ENCODE measurements at regions of chr13 and their contacts with region 1.

Region 1: DNA sequence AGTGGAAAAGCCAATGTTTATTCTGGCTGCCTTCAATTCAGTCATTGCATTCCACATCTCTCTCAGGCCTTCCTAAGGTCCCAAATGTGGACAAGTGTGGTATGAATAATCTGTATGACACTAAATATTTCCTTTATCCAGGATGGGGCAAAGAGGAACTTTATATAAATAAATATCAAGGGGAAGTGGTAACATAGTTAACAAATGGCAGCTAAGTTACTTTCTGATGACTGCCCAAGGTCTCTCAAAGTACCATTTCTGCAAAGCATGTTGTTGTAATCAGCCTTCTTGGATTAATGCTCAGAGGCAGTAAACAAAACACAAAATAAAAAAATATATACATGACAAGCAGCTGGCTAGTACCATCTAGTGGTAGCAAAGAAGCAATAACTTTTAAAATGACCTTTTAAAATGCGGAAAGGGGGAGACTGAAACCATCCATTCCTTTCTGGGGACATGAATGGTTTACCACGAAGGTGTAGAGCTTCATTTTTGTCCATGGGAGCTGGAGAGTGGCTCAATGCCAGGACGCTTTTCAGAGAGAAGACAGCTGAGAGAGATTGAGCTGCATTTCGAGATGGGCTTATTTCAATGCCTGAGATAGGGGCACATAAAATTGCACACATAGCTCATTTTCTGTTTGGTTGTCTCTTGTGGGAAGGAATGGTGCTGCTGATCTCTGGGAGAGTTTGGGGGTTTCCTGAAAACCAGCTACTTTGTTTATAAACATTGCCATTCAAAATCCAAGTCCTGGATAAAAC is 259.2 kb downstream of the RFC3 start:
- DNase-seq: no peak
- H3K4me3 ChIP-seq: no peak overlapping the region
- H3K27ac ChIP-seq: no peak overlapping the region
- H3K4me1 ChIP-seq: no peaks in the 10 kb centered on the region
- H3K27me3 ChIP-seq: no peaks in the 10 kb centered on the region
- CTCF ChIP-seq: peak; percentile 40 to 65 (median 51)
- POLR2A ChIP-seq: no peak

Region 2: DNA sequence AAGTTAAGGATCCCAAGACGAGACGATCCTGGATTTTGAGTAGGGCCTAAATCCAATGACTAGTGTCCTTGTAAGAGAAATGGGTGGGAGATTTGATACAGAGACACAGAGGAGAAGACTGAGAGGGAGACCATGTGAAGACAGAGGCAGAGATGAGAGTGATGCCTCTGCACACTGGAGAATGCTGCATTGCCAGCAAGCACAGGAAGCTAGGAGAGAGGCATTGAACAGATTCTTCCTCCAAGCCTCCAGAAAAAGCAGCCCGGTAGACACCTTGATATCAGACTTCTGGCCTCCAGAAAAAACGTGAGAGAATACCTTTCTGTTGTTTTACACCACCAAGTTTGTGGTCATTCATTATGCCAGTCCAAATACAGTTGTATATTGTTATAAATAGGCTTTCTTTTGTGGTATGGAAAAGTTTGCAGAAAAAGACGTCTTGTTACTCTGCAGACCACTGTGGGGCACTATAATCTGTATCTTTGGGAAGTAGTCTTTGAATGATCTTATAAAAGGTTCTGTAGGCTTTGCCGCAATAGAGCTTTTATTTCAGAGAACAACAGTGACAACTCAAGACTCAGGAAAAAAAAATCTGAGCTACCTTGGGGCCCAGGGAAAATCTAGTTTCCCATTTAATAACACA is 277.1 kb before region 1 on chr13:
- intact Hi-C with region 1: loop called (anchors 10 kb)
- DNase-seq: no peak
- H3K4me3 ChIP-seq: no peak overlapping the region
- H3K27ac ChIP-seq: no peak overlapping the region
- H3K4me1 ChIP-seq: no peaks in the 10 kb centered on the region
- H3K27me3 ChIP-seq: no peaks in the 10 kb centered on the region
- CTCF ChIP-seq: peak in 3 of 4 experiments; percentile 25 to 41 (median 32)
- POLR2A ChIP-seq: no peak

Region 3: DNA sequence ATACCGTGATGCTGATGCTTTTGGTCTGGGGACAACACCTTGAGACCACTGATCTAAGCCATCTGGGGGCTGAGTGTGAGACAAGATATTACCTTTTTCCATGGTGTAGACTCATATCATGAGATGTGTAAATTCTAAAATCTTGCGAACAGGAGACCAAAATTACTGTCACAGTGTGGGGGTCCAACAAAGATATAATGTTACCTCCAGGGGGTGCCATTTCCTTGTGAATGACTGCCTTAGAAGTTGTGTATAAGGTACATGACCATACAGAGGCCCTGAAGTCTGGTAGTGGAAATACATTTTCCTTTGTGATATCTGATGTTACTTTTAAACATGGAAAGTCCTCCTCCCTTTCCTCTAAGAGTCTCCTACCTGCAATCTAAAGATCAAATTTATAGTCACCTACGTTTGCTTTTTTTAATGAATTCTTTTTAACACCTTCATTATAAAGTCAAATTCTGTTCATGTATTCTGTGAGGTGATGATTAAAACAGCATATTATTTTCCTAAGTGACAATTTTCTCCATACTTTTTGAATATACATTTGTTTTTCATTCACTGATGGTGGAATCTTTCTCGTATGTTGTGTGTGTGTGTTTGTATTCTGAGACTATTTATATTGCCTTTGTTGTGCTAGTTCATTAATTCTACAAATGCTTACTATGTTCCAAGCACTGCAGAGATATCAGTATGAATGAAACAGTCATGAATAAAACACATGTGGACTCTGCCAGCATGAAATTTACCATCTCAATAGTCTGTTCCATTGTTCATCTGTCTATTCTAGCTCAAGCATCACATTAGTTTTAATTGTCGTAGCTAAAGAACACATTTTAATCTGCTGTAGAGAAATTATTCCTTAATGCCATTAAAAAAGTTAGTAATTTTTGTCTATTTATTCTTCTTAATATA is 145.5 kb before region 1 on chr13:
- intact Hi-C with region 1: loop called (anchors 5 kb)
- DNase-seq: peak; percentile 37
- H3K4me3 ChIP-seq: no peak overlapping the region
- H3K27ac ChIP-seq: no peak overlapping the region
- H3K4me1 ChIP-seq: no peaks in the 10 kb centered on the region
- H3K27me3 ChIP-seq: no peaks in the 10 kb centered on the region
- CTCF ChIP-seq: peak; percentile 24 to 66 (median 61)
- POLR2A ChIP-seq: no peak

Region 4: DNA sequence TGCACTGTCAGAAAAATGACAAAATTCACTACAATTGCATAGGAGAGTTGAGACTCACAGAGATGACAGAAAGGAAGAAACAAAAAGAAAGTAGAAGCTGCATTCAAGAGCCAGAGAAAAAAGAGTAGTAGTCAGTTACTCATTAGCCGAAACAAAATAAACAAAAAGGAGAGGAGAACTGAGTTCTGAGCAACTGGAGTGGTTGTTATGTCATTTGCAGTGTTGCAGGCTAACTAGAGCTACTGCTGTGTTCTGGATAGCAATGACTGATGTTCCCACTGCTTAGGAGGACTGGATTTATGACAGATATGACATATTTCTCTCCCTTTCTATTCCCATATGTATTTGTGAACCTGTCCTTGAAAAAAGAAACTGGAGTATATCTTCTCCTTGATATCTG is 223.4 kb after region 1 on chr13:
- intact Hi-C with region 1: no loop called
- DNase-seq: no peak
- H3K4me3 ChIP-seq: no peak overlapping the region
- H3K27ac ChIP-seq: no peak overlapping the region
- H3K4me1 ChIP-seq: no peaks in the 10 kb centered on the region
- H3K27me3 ChIP-seq: no peaks in the 10 kb centered on the region
- CTCF ChIP-seq: no peak
- POLR2A ChIP-seq: no peak

Region 5: DNA sequence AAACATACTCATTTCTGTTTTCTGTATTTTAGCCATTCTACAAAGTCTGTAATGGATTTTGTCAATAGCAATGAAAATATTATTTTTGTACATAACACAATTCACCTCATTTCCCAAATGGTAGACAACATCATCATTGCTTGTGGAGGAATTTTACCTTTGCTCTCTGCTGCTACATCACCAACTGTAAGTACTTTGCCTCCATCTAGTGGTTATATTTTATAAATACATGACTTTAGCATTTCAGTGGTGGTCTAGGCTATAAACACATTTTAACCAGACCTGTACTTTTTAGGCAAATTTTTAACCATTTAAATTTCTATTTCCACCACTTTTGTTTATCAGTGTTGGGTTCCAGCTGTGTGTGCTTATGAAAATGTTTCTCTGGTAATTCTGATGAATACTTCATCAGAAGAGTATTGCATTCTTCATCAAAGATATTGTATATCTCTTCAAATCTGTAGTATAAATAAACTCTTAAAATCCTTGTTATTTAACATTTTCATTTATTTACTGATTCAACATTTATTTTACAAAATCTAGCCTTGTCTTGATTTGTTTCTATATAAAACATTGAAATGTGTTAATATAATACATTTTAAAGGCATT is 1087.3 kb after region 1 on chr13:
- intact Hi-C with region 1: loop called (anchors 5 kb)
- DNase-seq: no peak
- H3K4me3 ChIP-seq: no peak overlapping the region
- H3K27ac ChIP-seq: no peak overlapping the region
- H3K4me1 ChIP-seq: no peaks in the 10 kb centered on the region
- H3K27me3 ChIP-seq: no peaks in the 10 kb centered on the region
- CTCF ChIP-seq: peak in 3 of 4 experiments; percentile 59 to 76 (median 68)
- POLR2A ChIP-seq: no peak